Adrenal gland (tissue), 19 donors: ENCODE measurements at regions of chr5 and their contacts with region 1.

Region 1: GRCh38 chr5:76337953-76338451 is 65.1 kb upstream of the IQGAP2 start:
- DNase-seq: peak; percentile 43 to 76 (median 58)
- H3K4me3 ChIP-seq: no peak overlapping the region
- H3K27ac ChIP-seq: no peak overlapping the region
- H3K4me1 ChIP-seq: no peaks in the 10 kb centered on the region
- H3K27me3 ChIP-seq: no peaks in the 10 kb centered on the region
- CTCF ChIP-seq: peak; percentile 38 to 67 (median 63)
- POLR2A ChIP-seq: no peak

Region 2: GRCh38 chr5:76393035-76393680 is 55.2 kb after region 1 on chr5:
- intact Hi-C with region 1: no loop called
- DNase-seq: no peak
- H3K4me3 ChIP-seq: no peak overlapping the region
- H3K27ac ChIP-seq: no peak overlapping the region
- H3K4me1 ChIP-seq: no peaks in the 10 kb centered on the region
- H3K27me3 ChIP-seq: no peaks in the 10 kb centered on the region
- CTCF ChIP-seq: no peak
- POLR2A ChIP-seq: no peak

Region 3: GRCh38 chr5:76571559-76571958 is 233.6 kb after region 1 on chr5:
- intact Hi-C with region 1: loop called in 1 of 2 experiments (anchors 10 kb)
- DNase-seq: no peak
- H3K4me3 ChIP-seq: no peak overlapping the region
- H3K27ac ChIP-seq: no peak overlapping the region
- H3K4me1 ChIP-seq: no peaks in the 10 kb centered on the region
- H3K27me3 ChIP-seq: no peaks in the 10 kb centered on the region
- CTCF ChIP-seq: peak in 2 of 6 experiments; percentile 7 to 16
- POLR2A ChIP-seq: no peak